Activated CD8-positive, alpha-beta T cell treated with anti-CD3 and anti-CD28 coated beads, Interleukin-2, amount 10 ng/mL, durations not matched to agents 7 days and 5 days (primary cell): ENCODE measurements at regions of chr17 and their contacts with region 1.

Region 1: GRCh38 chr17:50865984-50866774 is at the start of gene TOB1:
- DNase-seq: peak; percentile 96
- ATAC-seq: peak; percentile 73
- H3K4me3 Mint-ChIP-seq: peak within 1 kb of the TSS; percentile 92
- H3K27ac Mint-ChIP-seq: peak within 1 kb of the TSS; percentile 95
- H3K4me1 Mint-ChIP-seq: peaks cover 46% of the 10 kb centered on the region
- H3K27me3 Mint-ChIP-seq: peaks cover 7% of the 10 kb centered on the region
- total RNA-seq, gene TOB1: 44.5 to 47.6 TPM

Region 2: DNA sequence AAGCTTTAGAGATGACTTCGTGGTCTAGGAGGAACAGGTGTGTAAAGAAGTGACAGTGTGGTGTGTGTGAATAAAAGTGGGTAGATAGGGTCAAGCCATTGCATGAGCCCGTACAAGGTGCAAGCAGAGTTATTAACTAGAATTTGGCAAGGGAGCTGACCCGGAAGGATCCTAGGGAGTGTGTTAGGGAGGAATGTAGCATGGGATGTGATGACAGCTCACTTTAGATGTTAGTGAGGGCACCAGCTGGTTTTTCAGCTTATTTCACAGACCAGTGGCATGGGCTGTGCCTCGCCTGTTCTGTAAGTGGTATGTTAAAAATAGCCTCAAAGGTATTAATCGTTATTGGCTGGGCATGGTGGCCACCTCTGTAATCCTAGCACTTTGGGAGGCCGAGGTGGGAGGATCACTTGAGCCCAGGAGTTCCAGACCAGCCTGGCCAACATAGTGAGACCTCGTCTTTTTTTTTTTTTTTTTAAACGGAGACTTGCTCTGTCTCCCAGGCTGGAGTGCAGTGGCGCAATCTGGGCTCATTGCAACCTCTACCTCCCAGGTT is 107.1 kb before region 1 on chr17:
- CTCF ChIA-PET with region 1: no interaction called
- POLR2A ChIA-PET with region 1: no interaction called
- DNase-seq: no peak
- ATAC-seq: peak; percentile 9
- H3K4me3 Mint-ChIP-seq: no peak overlapping the region
- H3K27ac Mint-ChIP-seq: no peak overlapping the region
- H3K4me1 Mint-ChIP-seq: peaks cover 2% of the 10 kb centered on the region
- H3K27me3 Mint-ChIP-seq: peaks cover 14% of the 10 kb centered on the region

Region 3: GRCh38 chr17:50883850-50884438 is 17.8 kb after region 1 on chr17:
- CTCF ChIA-PET with region 1: interaction called, 3 read pairs
- POLR2A ChIA-PET with region 1: interaction called, 28 read pairs
- DNase-seq: no peak
- ATAC-seq: no peak
- H3K4me3 Mint-ChIP-seq: no peak overlapping the region
- H3K27ac Mint-ChIP-seq: no peak overlapping the region
- H3K4me1 Mint-ChIP-seq: peaks cover 22% of the 10 kb centered on the region
- H3K27me3 Mint-ChIP-seq: peaks cover 12% of the 10 kb centered on the region

Region 4: GRCh38 chr17:50899005-50899460 is 32.9 kb after region 1 on chr17:
- CTCF ChIA-PET with region 1: interaction called, 4 read pairs
- POLR2A ChIA-PET with region 1: interaction called, 25 read pairs
- DNase-seq: no peak
- ATAC-seq: no peak
- H3K4me3 Mint-ChIP-seq: no peak overlapping the region
- H3K27ac Mint-ChIP-seq: no peak overlapping the region
- H3K4me1 Mint-ChIP-seq: peaks cover 26% of the 10 kb centered on the region
- H3K27me3 Mint-ChIP-seq: peaks cover 9% of the 10 kb centered on the region

Region 5: GRCh38 chr17:50919321-50920085 is 53.3 kb after region 1 on chr17:
- CTCF ChIA-PET with region 1: interaction called, 6 read pairs
- POLR2A ChIA-PET with region 1: interaction called, 109 read pairs
- DNase-seq: peak; percentile 93
- ATAC-seq: peak; percentile 94
- H3K4me3 Mint-ChIP-seq: peak overlapping the region; percentile 47
- H3K27ac Mint-ChIP-seq: peak overlapping the region; percentile 90
- H3K4me1 Mint-ChIP-seq: peaks cover 54% of the 10 kb centered on the region
- H3K27me3 Mint-ChIP-seq: peaks cover 7% of the 10 kb centered on the region

Region 6: GRCh38 chr17:50944054-50944901 is 78.1 kb after region 1 on chr17:
- CTCF ChIA-PET with region 1: interaction called, 188 read pairs
- POLR2A ChIA-PET with region 1: interaction called, 163 read pairs
- DNase-seq: peak; percentile 89
- ATAC-seq: peak; percentile 90
- H3K4me3 Mint-ChIP-seq: peak overlapping the region; percentile 72
- H3K27ac Mint-ChIP-seq: peak overlapping the region; percentile 81
- H3K4me1 Mint-ChIP-seq: peaks cover 41% of the 10 kb centered on the region
- H3K27me3 Mint-ChIP-seq: no peaks in the 10 kb centered on the region

Region 7: GRCh38 chr17:50956750-50957523 is 90.8 kb after region 1 on chr17:
- CTCF ChIA-PET with region 1: interaction called, 188 read pairs
- POLR2A ChIA-PET with region 1: interaction called, 163 read pairs
- DNase-seq: peak; percentile 79
- ATAC-seq: peak; percentile 95
- H3K4me3 Mint-ChIP-seq: no peak overlapping the region
- H3K27ac Mint-ChIP-seq: no peak overlapping the region
- H3K4me1 Mint-ChIP-seq: peaks cover 23% of the 10 kb centered on the region
- H3K27me3 Mint-ChIP-seq: no peaks in the 10 kb centered on the region

Region 8: GRCh38 chr17:51056813-51057510 is 190.8 kb after region 1 on chr17:
- CTCF ChIA-PET with region 1: no interaction called
- POLR2A ChIA-PET with region 1: no interaction called
- DNase-seq: peak; percentile 54
- ATAC-seq: peak; percentile 57
- H3K4me3 Mint-ChIP-seq: no peak overlapping the region
- H3K27ac Mint-ChIP-seq: no peak overlapping the region
- H3K4me1 Mint-ChIP-seq: peaks cover 6% of the 10 kb centered on the region
- H3K27me3 Mint-ChIP-seq: no peaks in the 10 kb centered on the region

Region 9: DNA sequence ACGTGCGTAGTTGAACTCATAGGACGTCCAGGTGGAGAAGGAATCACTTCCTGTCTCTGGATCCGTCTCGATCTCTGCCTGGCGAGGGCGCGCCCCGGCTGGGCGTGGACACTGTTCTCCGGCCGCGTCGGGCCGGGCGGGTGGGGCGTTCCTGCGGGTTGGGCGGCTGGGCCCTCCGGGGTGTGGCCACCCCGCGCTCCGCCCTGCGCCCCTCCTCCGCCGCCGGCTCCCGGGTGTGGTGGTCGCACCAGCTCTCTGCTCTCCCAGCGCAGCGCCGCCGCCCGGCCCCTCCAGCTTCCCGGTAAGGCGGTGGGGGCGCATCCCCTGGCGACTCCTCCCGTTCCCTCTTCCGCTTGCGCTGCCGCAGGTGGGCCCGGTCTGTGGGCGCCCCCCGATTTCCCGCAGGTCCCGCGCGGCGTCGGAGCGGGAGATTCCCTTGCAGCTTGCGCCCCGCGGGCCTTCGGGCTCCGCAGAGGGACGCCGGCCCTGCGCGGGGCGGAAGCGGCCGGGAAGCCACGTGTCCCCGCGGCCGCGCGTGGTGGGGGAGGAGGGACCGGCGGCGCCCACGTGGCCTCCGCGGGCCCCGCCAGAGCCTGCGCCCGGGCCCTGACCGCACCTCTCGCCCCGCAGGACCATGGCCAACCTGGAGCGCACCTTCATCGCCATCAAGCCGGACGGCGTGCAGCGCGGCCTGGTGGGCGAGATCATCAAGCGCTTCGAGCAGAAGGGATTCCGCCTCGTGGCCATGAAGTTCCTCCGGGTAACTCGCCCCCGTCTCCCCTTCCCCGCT is 300.2 kb after region 1 on chr17 and contains the start of gene NME2:
- CTCF ChIA-PET with region 1: no interaction called
- POLR2A ChIA-PET with region 1: interaction called, 10 read pairs
- DNase-seq: peak; percentile 77
- ATAC-seq: peak; percentile 84
- H3K4me3 Mint-ChIP-seq: peak within 1 kb of the TSS; percentile 88
- H3K27ac Mint-ChIP-seq: peak within 1 kb of the TSS; percentile 97
- H3K4me1 Mint-ChIP-seq: peaks cover 37% of the 10 kb centered on the region
- H3K27me3 Mint-ChIP-seq: no peaks in the 10 kb centered on the region
- total RNA-seq, gene NME2: 502 to 542 TPM